Aorta (tissue), 5 donors: ENCODE measurements at regions of chr11 and their contacts with region 1.

Region 1: GRCh38 chr11:119018074-119018938 is at the starts of genes RPS25 and TRAPPC4:
- DNase-seq: peak; percentile 97 to 98
- ATAC-seq: peak; percentile 97
- H3K4me3 ChIP-seq: peak within 1 kb of the TSS; percentile 52 to 75
- H3K27ac ChIP-seq: peak within 1 kb of the TSS; percentile 8 to 87
- H3K4me1 ChIP-seq: no peaks in the 10 kb centered on the region
- H3K27me3 ChIP-seq: no peaks in the 10 kb centered on the region
- total RNA-seq, gene RPS25: 804 to 820 TPM
- total RNA-seq, gene TRAPPC4: 49.6 to 54.3 TPM

Region 2: DNA sequence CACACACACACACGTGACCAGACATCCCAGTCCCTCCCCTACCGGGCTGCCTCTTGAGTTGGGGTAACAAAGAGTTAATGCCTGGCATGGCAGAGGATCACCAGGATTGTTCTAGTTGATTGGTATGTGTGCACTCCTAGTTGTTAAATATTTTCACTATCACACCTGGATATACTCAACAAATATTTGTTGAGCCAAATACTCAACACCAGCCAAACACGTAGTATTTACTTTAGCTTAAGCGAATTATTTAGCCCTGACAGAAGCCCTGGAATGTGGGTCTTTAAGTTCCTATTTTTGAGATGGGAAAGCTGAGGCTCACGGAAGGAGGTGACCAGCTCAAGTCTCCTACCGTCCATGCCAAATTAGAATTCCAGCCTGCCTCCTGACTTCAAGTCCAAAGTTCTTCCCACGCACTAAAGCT is 703.3 kb before region 1 on chr11:
- intact Hi-C with region 1: no loop called
- DNase-seq: no peak
- ATAC-seq: no peak
- H3K4me3 ChIP-seq: no peak overlapping the region
- H3K27ac ChIP-seq: no peak overlapping the region
- H3K4me1 ChIP-seq: no peaks in the 10 kb centered on the region
- H3K27me3 ChIP-seq: no peaks in the 10 kb centered on the region

Region 3: GRCh38 chr11:118997627-118998387 is 20.5 kb before region 1 on chr11 and contains the start of gene CENATAC:
- intact Hi-C with region 1: loop called in 1 of 2 experiments (anchors 2 kb)
- DNase-seq: peak; percentile 97 to 99
- ATAC-seq: peak; percentile 99
- H3K4me3 ChIP-seq: peak within 1 kb of the TSS; percentile 59 to 68
- H3K27ac ChIP-seq: peak within 1 kb of the TSS; percentile 30 to 89
- H3K4me1 ChIP-seq: no peaks in the 10 kb centered on the region
- H3K27me3 ChIP-seq: no peaks in the 10 kb centered on the region
- total RNA-seq, gene CENATAC: 56.4 to 61.8 TPM